Breast epithelium (tissue), 4 donors: ENCODE measurements at regions of chr9 and their contacts with region 1.

Region 1: DNA sequence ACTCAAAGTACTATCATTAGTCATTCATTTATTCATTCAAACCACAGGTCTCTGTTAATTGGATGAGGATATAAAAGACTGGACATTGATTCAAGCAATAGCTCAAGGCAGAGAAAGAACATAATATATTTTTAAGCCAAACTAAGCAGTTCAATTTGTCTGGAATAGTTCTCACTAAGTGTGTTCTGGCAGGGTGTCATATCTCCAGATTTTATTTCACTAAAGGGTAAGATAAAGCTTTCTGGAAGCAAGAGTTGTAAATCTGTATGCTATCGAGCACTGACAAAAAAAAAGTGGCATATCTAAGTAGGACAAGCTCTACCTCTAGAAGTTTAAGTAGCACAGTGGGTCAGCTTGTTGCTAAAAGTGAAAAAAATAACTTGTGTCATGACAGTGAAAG is 375.6 kb downstream of the TUSC1 start:
- DNase-seq: no peak
- H3K4me3 ChIP-seq: no peak overlapping the region
- H3K27ac ChIP-seq: no peak overlapping the region
- H3K4me1 ChIP-seq: no peaks in the 10 kb centered on the region
- H3K27me3 ChIP-seq: no peaks in the 10 kb centered on the region
- CTCF ChIP-seq: no peak
- POLR2A ChIP-seq: no peak

Region 2: GRCh38 chr9:24620741-24621140 is 681.9 kb before region 1 on chr9:
- intact Hi-C with region 1: loop called (anchors 10 kb)
- DNase-seq: no peak
- H3K4me3 ChIP-seq: no peak overlapping the region
- H3K27ac ChIP-seq: no peak overlapping the region
- H3K4me1 ChIP-seq: no peaks in the 10 kb centered on the region
- H3K27me3 ChIP-seq: no peaks in the 10 kb centered on the region
- CTCF ChIP-seq: no peak
- POLR2A ChIP-seq: no peak

Region 3: GRCh38 chr9:24721621-24722020 is 581.0 kb before region 1 on chr9:
- intact Hi-C with region 1: no loop called
- DNase-seq: no peak
- H3K4me3 ChIP-seq: no peak overlapping the region
- H3K27ac ChIP-seq: no peak overlapping the region
- H3K4me1 ChIP-seq: no peaks in the 10 kb centered on the region
- H3K27me3 ChIP-seq: no peaks in the 10 kb centered on the region
- CTCF ChIP-seq: no peak
- POLR2A ChIP-seq: no peak